ENCODE measurements at regions of chr9 and their contacts with region 1.

Region 1: GRCh38 chr9:130715270-130716077 is 21.9 kb downstream of the EXOSC2 start:
- DNase-seq: no peak
- ATAC-seq: no peak
- H3K4me3 Mint-ChIP-seq: peak overlapping the region; percentile 19
- H3K27ac Mint-ChIP-seq: no peak overlapping the region
- H3K4me1 Mint-ChIP-seq: peaks cover 34% of the 10 kb centered on the region
- H3K27me3 Mint-ChIP-seq: no peaks in the 10 kb centered on the region

Region 2: DNA sequence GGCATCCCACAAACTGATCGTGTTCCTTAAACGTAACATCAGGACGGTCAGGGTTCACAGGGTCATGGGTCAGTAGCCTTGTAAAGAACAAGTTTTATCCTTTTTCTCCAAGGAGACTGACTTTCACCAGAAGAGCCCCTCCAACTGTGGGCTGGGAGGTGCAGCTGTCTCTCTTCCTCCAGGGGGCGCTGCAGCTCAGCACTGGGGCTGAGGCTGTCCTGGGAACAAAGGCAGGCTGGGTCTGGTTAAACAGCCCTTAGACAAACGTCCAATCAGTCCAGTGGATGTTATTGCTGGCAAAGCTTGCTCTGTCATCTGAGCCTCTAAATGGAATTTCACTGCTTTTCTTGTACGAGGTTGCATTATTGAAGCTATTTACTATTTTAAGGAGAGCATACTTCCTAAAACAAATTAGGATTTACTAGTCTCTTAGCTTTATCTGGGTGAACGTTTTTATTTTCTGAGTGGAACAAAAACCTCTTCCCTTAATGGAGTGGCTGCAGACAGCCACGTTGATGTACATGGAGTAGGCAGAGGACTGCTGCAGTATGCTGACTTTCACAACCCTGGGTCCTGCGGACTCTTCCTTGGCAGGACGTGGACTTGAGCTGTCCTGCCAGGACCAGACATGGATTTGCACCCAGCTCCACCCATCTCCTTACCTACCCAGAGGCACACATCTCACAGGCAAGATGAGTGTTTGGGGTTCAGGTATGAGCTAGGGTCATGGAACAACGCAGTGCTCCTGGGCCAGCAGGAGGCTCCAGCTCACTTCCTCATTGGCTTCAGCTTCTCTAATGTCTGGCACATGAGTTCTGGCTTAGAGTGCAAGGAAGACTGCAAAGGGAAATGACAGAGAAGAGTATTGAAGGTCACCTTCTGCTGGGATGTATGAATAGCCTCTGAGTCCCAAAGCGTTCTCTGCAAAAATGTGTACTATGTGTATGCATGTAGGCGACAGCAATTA is 14.1 kb before region 1 on chr9:
- CTCF ChIA-PET with region 1: interaction called, 26 read pairs
- DNase-seq: peak; percentile 73
- ATAC-seq: peak; percentile 85
- H3K4me3 Mint-ChIP-seq: no peak overlapping the region
- H3K27ac Mint-ChIP-seq: peak overlapping the region; percentile 22
- H3K4me1 Mint-ChIP-seq: peaks cover 27% of the 10 kb centered on the region
- H3K27me3 Mint-ChIP-seq: no peaks in the 10 kb centered on the region